ENCODE measurements at regions of chr3 and their contacts with region 1.

Region 1: DNA sequence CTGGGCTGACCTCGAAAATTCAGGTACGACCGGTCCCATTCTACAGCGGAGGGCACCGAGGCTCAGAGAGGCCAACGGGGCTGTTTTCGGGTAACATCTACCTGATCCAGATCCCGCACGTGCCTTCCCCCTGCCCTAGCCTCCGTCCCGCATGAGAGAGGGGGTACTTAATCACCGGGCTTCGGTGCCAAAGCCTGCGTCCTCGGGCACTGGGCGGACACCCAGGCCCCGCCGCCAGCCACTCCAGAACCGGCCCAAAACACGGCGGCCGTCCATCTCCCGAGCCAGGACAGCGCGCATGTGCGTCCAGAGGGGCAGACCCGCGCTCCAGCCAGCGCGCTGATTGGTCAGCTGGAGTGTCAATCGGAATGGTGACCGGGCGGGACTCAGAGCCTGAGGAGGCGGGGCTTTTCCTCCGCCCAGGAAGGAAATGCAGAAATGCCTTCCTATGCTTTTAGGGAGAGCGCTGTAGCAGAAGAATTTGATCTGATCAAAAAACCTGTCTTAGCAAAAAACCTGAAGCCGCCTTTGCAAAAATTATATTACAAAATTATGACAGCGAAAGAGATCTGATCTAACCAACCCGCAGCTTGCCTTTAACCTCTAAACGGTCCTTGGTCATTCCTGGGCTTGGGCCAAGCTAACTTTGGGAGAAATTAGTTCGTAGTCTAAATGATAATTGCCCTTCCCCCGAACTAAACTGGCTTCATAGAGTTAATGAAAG is at the start of gene RPUSD3:
- DNase-seq: peak; percentile 95 to 99
- H3K4me3 ChIP-seq: peak within 1 kb of the TSS; percentile 56 to 94 (median 67)
- H3K27ac ChIP-seq: peak within 1 kb of the TSS; percentile 75 to 91
- H3K4me1 ChIP-seq: peaks cover 0 to 3% of the 10 kb centered on the region in 2 donors
- H3K27me3 ChIP-seq: no peaks in the 10 kb centered on the region
- CTCF ChIP-seq: peak in 1 of 3 donors; percentile 13
- POLR2A ChIP-seq: peak; percentile 64
- total RNA-seq, gene RPUSD3: 33.4 to 41.3 (median 38.3) TPM

Region 2: GRCh38 chr3:8341821-8342247 is 1502.0 kb before region 1 on chr3:
- intact Hi-C with region 1: no loop called
- DNase-seq: no peak
- H3K4me3 ChIP-seq: no peak overlapping the region
- H3K27ac ChIP-seq: no peak overlapping the region
- H3K4me1 ChIP-seq: no peaks in the 10 kb centered on the region
- H3K27me3 ChIP-seq: no peaks in the 10 kb centered on the region
- CTCF ChIP-seq: no peak
- POLR2A ChIP-seq: no peak

Region 3: DNA sequence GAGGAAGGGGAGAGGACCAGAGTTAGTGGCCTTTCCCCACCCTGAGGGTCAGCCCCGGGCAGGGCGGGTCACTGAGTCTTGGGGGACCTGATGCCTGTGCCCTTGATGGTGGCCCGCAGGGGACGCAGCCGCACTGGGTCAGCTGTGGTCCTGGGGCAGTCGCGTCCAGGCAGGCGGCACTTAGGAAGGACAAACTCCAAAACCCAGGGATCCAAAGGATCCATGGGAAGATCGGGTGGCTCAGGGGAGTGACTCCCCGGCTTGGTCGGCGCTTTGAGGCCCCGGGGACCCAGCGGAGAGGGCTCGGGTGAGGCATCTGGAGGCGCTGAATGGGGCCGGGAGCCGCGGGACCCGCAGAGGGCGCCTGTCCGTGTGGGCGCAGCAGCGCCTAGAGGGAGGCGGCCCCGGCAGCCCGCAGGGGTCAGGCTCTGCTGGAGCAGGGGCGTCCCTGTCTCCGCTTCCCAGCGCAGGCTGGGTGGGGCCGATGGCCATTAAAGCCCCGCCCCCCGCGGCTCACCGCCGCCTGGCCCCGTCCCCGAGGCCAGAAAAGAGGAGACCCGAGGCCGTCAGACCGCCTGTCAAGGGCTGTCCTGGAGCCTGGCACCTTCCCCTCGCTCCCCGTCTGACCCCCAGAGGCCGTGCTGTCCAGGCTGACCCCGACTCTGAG is 18.6 kb after region 1 on chr3:
- intact Hi-C with region 1: no loop called
- DNase-seq: no peak
- H3K4me3 ChIP-seq: peak overlapping the region; percentile 35 to 60 (median 35)
- H3K27ac ChIP-seq: peak overlapping the region; percentile 93 to 97
- H3K4me1 ChIP-seq: peaks cover 5 to 13% of the 10 kb centered on the region in 2 donors
- H3K27me3 ChIP-seq: no peaks in the 10 kb centered on the region
- CTCF ChIP-seq: no peak
- POLR2A ChIP-seq: no peak

Region 4: GRCh38 chr3:9946112-9947024 is 102.5 kb after region 1 on chr3:
- intact Hi-C with region 1: loop called (anchors 10 kb)
- DNase-seq: peak; percentile 83 to 87
- H3K4me3 ChIP-seq: peak overlapping the region; percentile 62 to 78 (median 62)
- H3K27ac ChIP-seq: peak overlapping the region; percentile 82 to 93
- H3K4me1 ChIP-seq: peaks cover 0 to 6% of the 10 kb centered on the region in 2 donors
- H3K27me3 ChIP-seq: no peaks in the 10 kb centered on the region
- CTCF ChIP-seq: peak; percentile 35 to 65 (median 47)
- POLR2A ChIP-seq: no peak